AG04449 (cell line): ENCODE measurements at regions of chr4 and their contacts with region 1.

Region 1: DNA sequence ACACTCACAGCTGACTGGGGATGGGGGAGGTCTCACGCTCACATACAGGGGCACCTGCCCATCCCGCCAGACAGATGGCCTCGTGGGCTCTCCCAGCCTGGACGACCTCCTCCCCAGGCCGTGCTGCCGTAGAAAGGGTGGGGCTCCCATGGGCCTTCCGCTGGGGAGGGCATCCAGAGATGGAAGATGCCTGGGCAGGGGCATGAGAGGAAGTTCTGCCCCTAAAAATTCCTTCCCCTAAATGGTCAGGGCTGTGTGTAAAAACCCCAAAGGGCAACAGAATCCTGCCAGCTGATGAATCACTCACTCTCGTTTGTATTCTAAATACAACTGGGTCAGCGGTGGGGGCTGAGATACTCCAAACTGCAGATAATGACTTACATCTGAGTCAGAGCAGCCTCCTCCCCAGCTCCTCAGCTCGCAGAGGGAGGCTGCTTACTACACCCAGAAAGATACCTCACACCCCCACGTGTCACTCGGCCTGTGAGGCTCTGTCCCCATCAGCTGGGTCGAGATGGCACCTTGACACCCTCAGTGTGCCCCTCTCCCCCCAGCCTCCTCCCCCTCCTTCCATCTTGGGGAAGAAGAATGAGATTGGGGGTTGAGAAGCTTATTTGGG is 10.1 kb downstream of the WDR1 start:
- DNase-seq: peak; percentile 93
- H3K4me3 ChIP-seq: peak overlapping the region; percentile 46
- CTCF ChIP-seq: no peak

Region 2: DNA sequence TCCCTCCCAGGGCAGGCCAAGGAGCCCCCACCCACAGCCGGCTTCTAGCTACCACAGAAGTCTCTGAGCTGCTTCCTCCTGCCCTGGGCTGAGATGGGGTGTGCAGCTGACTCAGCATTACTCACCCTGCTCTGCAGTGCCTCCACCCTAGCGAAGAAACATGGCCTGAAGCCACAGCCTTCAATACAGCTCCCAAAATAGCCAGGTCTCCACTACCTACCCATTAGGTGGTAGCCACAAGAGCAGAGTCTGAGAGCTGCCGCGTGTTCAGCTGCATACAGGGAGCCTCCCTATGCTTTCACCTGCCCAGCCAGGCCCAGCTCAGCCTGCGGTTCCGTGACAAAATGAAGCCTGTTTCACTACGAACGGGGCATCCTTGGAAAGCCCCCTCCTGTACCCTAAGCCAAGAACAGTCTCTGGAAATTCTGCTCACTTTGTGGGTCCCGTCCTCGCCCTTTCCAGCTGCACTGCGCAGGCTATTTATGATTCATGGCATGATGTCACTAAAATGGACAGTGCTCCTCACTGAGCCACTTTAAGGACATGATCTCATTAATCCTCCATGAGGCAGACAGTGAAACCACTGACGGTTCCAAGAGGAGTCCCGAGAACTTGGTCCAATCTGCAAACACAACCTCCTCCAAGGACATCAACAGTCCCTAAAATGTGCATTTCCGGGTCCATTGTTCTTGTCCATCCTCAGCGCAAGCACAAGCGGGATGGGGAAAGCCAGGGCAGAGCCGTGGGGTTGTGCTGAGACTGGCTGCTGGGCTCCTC is 10.1 kb before region 1 on chr4:
- CTCF ChIA-PET with region 1: interaction called, 5 read pairs
- POLR2A ChIA-PET with region 1: interaction called, 45 read pairs
- DNase-seq: peak; percentile 36
- H3K4me3 ChIP-seq: no peak overlapping the region
- CTCF ChIP-seq: no peak

Region 3: DNA sequence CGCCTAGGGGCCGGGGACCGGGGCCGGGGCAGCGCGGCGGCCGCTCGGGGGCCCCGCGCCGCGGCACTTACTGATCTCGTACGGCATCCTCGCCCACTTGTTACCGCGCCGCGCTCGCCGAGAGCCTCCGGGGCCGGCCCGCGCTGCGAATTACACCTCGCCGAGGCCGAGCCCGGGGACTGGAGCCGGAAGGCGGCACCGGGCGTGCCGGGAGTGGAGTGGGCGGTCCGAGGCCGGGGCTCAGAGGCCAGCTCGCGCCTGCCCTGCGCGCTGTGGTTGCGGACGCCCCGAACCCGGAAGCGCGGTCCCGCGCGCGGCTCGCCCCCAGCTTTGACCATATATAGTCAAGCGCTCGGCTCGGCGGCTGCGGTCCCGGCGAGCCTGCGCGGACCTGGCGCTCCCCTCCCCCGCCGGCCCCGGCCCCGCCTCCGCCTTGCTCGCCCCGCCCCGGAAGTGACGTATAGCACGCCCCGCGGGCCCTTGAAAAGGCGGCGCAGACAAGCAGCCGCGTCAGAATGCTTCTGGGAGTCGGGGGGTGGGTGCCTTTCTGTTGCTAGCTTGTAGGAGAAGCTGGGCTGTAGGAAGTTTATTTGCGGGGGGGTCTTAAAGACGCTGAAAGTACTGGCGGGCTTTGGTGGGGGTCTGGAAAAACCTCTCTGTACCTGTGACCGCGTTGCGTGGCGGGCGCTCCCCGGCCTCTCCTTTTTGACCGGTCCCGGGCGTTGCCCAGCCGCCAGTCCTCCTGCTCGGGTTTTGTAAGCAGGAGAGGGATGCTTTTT is 10.2 kb after region 1 on chr4 and contains the start of gene WDR1:
- CTCF ChIA-PET with region 1: interaction called, 3 read pairs
- POLR2A ChIA-PET with region 1: interaction called, 72 read pairs
- DNase-seq: peak; percentile 57
- H3K4me3 ChIP-seq: peak within 1 kb of the TSS; percentile 85
- CTCF ChIP-seq: no peak

Region 4: GRCh38 chr4:10336471-10336870 is 229.9 kb after region 1 on chr4:
- CTCF ChIA-PET with region 1: no interaction called
- POLR2A ChIA-PET with region 1: no interaction called
- DNase-seq: no peak
- H3K4me3 ChIP-seq: no peak overlapping the region
- CTCF ChIP-seq: no peak